Activated T-helper 2 cell treated with anti-CD3 and anti-CD28 coated beads, Interferon-gamma antibody, Interleukin-2, Interleukin-4, amounts not matched to agents 10 μg/mL and 5 μg/mL and 100 μg/mL, durations not matched to agents 14 hours and 24 hours and 36 hours (primary cell): ENCODE measurements at regions of chr1 and their contacts with region 1.

Region 1: GRCh38 chr1:156480411-156481192 is 20.0 kb downstream of the MEF2D start:
- DNase-seq: peak; percentile 59
- H3K4me3 Mint-ChIP-seq: no peak overlapping the region
- H3K27ac Mint-ChIP-seq: peak overlapping the region; percentile 80
- H3K4me1 Mint-ChIP-seq: peaks cover 44% of the 10 kb centered on the region
- H3K27me3 Mint-ChIP-seq: no peaks in the 10 kb centered on the region

Region 2: DNA sequence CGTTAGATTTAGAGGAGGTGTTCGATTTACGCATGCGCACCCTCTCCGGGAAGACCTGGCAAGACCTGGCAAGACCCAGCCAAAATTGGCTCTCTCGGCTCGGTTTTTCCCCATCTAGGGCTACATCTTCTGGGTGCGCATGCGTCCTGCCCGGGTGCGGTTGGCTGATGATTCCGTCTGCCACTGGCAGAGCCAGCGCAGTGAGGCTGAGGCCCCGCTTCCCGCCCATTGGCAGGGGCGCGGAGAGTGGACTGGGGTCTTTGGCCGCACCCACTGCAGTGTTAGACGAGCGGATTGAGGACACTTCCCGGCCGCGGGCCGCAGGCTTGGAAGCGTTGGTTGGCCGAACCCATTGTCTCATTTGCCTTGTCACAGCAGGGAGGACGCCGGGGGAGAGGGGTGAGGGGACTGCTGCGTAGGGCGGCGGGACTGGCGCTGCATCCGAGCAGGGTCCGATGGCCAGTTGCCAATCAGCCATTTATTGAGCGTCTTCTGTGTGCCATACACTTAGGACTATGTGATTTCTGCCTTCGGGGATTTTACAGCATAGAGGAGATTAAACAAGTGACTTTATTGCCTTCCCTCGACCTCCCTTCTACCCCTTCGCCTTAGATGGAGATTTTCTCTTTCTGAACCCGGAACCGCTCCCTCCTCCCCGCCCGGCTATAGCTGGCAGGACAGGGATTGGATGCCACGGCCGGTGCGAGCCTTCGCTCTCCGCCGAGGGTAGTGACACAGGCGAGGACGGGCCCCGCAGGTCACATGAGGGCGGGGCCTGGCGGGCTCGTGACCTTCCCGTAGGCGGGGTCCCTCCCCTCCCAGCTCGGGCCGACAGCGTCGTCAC is 23.8 kb before region 1 on chr1:
- intact Hi-C with region 1: loop called (anchors 2 kb)
- DNase-seq: peak; percentile 92
- H3K4me3 Mint-ChIP-seq: peak overlapping the region; percentile 84
- H3K27ac Mint-ChIP-seq: peak overlapping the region; percentile 97
- H3K4me1 Mint-ChIP-seq: peaks cover 21% of the 10 kb centered on the region
- H3K27me3 Mint-ChIP-seq: peaks cover 13% of the 10 kb centered on the region

Region 3: DNA sequence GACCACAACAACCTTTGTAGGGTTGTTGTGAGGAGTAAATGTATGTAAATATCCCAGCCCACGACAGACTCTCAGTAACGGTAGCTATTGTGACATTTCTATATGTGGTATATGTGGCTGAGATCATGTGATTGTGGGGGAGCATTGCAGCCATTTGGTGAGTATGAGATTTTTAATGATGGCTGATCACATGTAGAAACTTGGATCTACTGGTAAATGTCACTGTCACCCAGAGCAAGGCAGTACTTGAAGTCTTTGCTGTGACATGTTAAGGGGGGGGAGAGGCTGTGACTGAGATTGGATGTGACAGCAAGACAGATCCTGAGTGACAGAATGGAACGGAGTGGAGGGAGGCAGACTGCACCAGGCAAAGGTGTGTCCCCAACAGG is 43.9 kb after region 1 on chr1:
- intact Hi-C with region 1: loop called (anchors 5 kb)
- DNase-seq: no peak
- H3K4me3 Mint-ChIP-seq: peak overlapping the region; percentile 10
- H3K27ac Mint-ChIP-seq: peak overlapping the region; percentile 81
- H3K4me1 Mint-ChIP-seq: peaks cover 34% of the 10 kb centered on the region
- H3K27me3 Mint-ChIP-seq: peaks cover 2% of the 10 kb centered on the region

Region 4: GRCh38 chr1:156583821-156584622 is 103.4 kb after region 1 on chr1:
- intact Hi-C with region 1: no loop called
- DNase-seq: peak; percentile 50
- H3K4me3 Mint-ChIP-seq: no peak overlapping the region
- H3K27ac Mint-ChIP-seq: no peak overlapping the region
- H3K4me1 Mint-ChIP-seq: peaks cover 8% of the 10 kb centered on the region
- H3K27me3 Mint-ChIP-seq: no peaks in the 10 kb centered on the region